HCT116 (cell line): ENCODE measurements at regions of chr16 and their contacts with region 1.

Region 1: GRCh38 chr16:25855818-25856217 is 164.1 kb downstream of the HS3ST4 start:
- DNase-seq: no peak
- ATAC-seq: no peak
- H3K4me3 ChIP-seq: no peak overlapping the region
- H3K27ac ChIP-seq: no peak overlapping the region
- H3K4me1 ChIP-seq: no peaks in the 10 kb centered on the region
- H3K27me3 ChIP-seq: no peaks in the 10 kb centered on the region
- CTCF ChIP-seq: no peak
- POLR2A ChIP-seq: no peak
- RAD21 ChIP-seq: no peak

Region 2: GRCh38 chr16:25788637-25789036 is 67.2 kb before region 1 on chr16:
- CTCF ChIA-PET with region 1: no interaction called
- POLR2A ChIA-PET with region 1: no interaction called
- RAD21 ChIA-PET with region 1: no interaction called
- intact Hi-C with region 1: loop called (anchors 2 kb)
- DNase-seq: no peak
- ATAC-seq: no peak
- H3K4me3 ChIP-seq: no peak overlapping the region
- H3K27ac ChIP-seq: no peak overlapping the region
- H3K4me1 ChIP-seq: no peaks in the 10 kb centered on the region
- H3K27me3 ChIP-seq: no peaks in the 10 kb centered on the region
- CTCF ChIP-seq: no peak
- POLR2A ChIP-seq: no peak
- RAD21 ChIP-seq: no peak

Region 3: GRCh38 chr16:25841761-25842160 is 14.1 kb before region 1 on chr16:
- CTCF ChIA-PET with region 1: no interaction called
- POLR2A ChIA-PET with region 1: no interaction called
- RAD21 ChIA-PET with region 1: no interaction called
- intact Hi-C with region 1: no loop called
- DNase-seq: no peak
- ATAC-seq: no peak
- H3K4me3 ChIP-seq: no peak overlapping the region
- H3K27ac ChIP-seq: no peak overlapping the region
- H3K4me1 ChIP-seq: no peaks in the 10 kb centered on the region
- H3K27me3 ChIP-seq: no peaks in the 10 kb centered on the region
- CTCF ChIP-seq: no peak
- POLR2A ChIP-seq: no peak
- RAD21 ChIP-seq: no peak